GM12878 (cell line): ENCODE measurements at regions of chr18 and their contacts with region 1.

Region 1: GRCh38 chr18:29879763-29880162 is 1162.8 kb downstream of the DSC3 start:
- DNase-seq: no peak
- ATAC-seq: no peak
- H3K4me3 ChIP-seq: no peak overlapping the region
- H3K27ac ChIP-seq: no peak overlapping the region
- H3K4me1 ChIP-seq: no peaks in the 10 kb centered on the region
- H3K27me3 ChIP-seq: no peaks in the 10 kb centered on the region
- CTCF ChIP-seq: no peak
- EP300 ChIP-seq: no peak
- POLR2A ChIP-seq: no peak
- RAD21 ChIP-seq: no peak

Region 2: DNA sequence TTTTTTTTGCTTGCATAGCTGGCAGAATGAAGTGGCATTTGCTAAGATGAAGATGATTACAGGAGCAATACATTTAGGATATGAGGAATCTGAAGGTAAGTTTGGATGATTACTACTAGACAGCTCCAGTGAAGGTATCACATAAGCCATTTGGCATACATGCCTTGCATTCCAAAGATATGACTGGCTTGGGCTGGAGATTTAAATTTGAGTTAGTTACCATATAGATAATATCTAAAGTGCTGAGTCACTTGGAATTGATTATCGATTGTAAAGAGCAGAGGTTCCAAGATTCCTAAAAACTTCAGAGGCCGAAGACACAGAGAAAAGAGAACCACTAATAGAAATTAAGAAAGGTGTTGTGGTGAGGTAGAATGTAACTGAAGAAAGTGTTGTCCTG is 136.4 kb after region 1 on chr18:
- CTCF ChIA-PET with region 1: no interaction called
- POLR2A ChIA-PET with region 1: no interaction called
- RAD21 ChIA-PET with region 1: no interaction called
- SMC1A ChIA-PET with region 1: no interaction called
- in situ Hi-C with region 1: no loop called
- intact Hi-C with region 1: no loop called
- DNase-seq: no peak
- ATAC-seq: no peak
- H3K4me3 ChIP-seq: no peak overlapping the region
- H3K27ac ChIP-seq: no peak overlapping the region
- H3K4me1 ChIP-seq: no peaks in the 10 kb centered on the region
- H3K27me3 ChIP-seq: no peaks in the 10 kb centered on the region
- CTCF ChIP-seq: no peak
- EP300 ChIP-seq: no peak
- POLR2A ChIP-seq: no peak
- RAD21 ChIP-seq: no peak

Region 3: GRCh38 chr18:30271716-30272115 is 392.0 kb after region 1 on chr18:
- CTCF ChIA-PET with region 1: interaction called, 74 read pairs
- POLR2A ChIA-PET with region 1: no interaction called
- RAD21 ChIA-PET with region 1: no interaction called
- SMC1A ChIA-PET with region 1: interaction called, 3 read pairs
- in situ Hi-C with region 1: loop called (anchors 10 kb)
- intact Hi-C with region 1: no loop called
- DNase-seq: no peak
- ATAC-seq: no peak
- H3K4me3 ChIP-seq: no peak overlapping the region
- H3K27ac ChIP-seq: no peak overlapping the region
- H3K4me1 ChIP-seq: no peaks in the 10 kb centered on the region
- H3K27me3 ChIP-seq: no peaks in the 10 kb centered on the region
- CTCF ChIP-seq: no peak
- EP300 ChIP-seq: no peak
- POLR2A ChIP-seq: no peak
- RAD21 ChIP-seq: no peak

Region 4: DNA sequence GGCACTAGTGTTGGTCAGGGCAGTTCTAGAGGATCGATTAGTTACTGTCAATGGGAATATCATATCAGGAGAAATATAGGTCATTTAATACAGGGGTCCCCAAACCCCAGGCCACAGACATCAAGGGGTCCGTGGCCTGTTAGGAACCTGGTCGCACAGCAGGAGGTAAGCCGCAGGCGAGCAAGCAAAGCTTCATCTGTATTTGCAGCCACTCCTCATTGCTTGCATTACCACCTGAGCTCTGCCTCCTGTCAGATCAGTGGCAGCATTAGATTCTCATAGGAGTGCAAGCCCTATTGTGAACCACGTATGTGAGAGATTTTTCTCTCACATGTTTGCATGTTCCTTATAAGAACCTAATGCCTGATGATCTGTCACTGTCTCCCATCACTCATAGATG is 1080.9 kb after region 1 on chr18:
- CTCF ChIA-PET with region 1: interaction called, 3 read pairs
- POLR2A ChIA-PET with region 1: no interaction called
- RAD21 ChIA-PET with region 1: no interaction called
- SMC1A ChIA-PET with region 1: no interaction called
- in situ Hi-C with region 1: loop called (anchors 5 kb)
- intact Hi-C with region 1: no loop called
- DNase-seq: no peak
- ATAC-seq: no peak
- H3K4me3 ChIP-seq: no peak overlapping the region
- H3K27ac ChIP-seq: no peak overlapping the region
- H3K4me1 ChIP-seq: no peaks in the 10 kb centered on the region
- H3K27me3 ChIP-seq: no peaks in the 10 kb centered on the region; a peak in 1 of 4 replicates
- CTCF ChIP-seq: no peak
- EP300 ChIP-seq: no peak
- POLR2A ChIP-seq: no peak
- RAD21 ChIP-seq: no peak